AG04450 (cell line): ENCODE measurements at regions of chr11 and their contacts with region 1.

Region 1: DNA sequence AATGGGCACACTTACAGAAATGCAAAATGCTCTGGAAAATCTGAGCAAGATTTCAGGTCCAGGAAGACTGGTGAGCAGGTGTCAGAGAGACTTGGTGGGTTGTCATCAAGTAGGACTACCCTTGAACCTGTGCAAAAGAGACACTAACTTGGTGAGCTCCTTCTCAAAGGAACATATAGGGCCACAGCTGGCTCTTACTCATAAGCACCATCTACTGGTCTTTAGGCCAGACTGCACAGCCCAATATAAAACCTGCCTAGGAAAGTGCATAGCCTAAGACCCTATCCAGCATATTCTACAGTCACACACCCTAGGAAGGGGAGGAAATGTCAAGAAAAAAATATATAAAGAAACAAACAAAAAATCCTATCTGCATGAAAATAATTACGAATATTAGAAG is 18.2 kb upstream of the OR10W1 start:
- DNase-seq: peak; percentile 16
- H3K4me3 ChIP-seq: no peak overlapping the region
- H3K27ac ChIP-seq: no peak overlapping the region
- H3K27me3 ChIP-seq: no peaks in the 10 kb centered on the region
- CTCF ChIP-seq: peak; percentile 86

Region 2: DNA sequence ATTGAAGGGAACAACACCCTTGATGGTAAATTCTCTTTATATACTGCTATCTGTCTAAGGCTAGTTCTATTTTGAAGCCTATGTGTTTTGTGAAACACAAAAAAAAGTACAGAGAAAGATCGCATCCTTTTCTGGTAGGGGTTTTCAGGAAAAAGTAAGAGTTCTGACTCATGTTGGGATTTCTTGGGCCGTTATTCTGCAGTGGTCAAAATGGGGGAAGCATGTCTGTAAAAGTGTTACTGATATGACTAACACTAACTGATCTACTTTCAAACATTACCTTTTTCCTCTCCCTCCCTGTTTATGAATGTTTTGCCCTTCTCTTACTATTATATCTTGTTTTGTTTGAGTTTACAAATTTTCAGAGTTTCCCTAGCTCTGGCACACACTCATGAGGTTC is 470.8 kb before region 1 on chr11:
- CTCF ChIA-PET with region 1: interaction called, 12 read pairs
- POLR2A ChIA-PET with region 1: no interaction called
- DNase-seq: no peak
- H3K4me3 ChIP-seq: no peak overlapping the region
- H3K27ac ChIP-seq: no peak overlapping the region
- H3K27me3 ChIP-seq: no peaks in the 10 kb centered on the region
- CTCF ChIP-seq: no peak

Region 3: GRCh38 chr11:58192229-58192628 is 94.0 kb before region 1 on chr11:
- CTCF ChIA-PET with region 1: no interaction called
- POLR2A ChIA-PET with region 1: no interaction called
- DNase-seq: no peak
- H3K4me3 ChIP-seq: no peak overlapping the region
- H3K27ac ChIP-seq: no peak overlapping the region
- H3K27me3 ChIP-seq: no peaks in the 10 kb centered on the region
- CTCF ChIP-seq: no peak

Region 4: DNA sequence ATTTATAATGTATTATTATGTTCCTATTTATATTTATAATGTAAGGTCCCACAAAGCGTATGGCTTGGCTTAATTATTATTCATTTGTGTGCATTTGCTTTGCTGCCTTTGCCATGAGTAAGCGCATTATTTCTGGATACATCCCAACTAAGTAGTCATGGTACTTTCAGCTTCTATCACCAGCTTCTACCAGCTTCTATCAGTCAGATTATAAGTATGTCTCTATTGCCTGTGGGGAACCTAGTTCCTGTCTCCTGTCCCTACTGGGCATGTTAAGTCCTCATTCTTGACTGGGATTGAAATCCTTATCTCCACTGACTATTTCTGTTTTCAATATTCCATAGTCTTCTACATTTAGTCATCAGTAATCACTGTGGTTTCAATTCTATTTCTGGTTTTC is 15.3 kb after region 1 on chr11:
- CTCF ChIA-PET with region 1: interaction called, 25 read pairs
- POLR2A ChIA-PET with region 1: no interaction called
- DNase-seq: peak; percentile 33
- H3K4me3 ChIP-seq: no peak overlapping the region
- H3K27ac ChIP-seq: no peak overlapping the region
- H3K27me3 ChIP-seq: no peaks in the 10 kb centered on the region
- CTCF ChIP-seq: no peak